Prostate gland (tissue), 2 donors: ENCODE measurements at regions of chr12 and their contacts with region 1.

Region 1: GRCh38 chr12:19647806-19648556 is 208.7 kb downstream of the AEBP2 start:
- DNase-seq: no peak
- H3K4me3 ChIP-seq: no peak overlapping the region
- H3K27ac ChIP-seq: no peak overlapping the region
- H3K4me1 ChIP-seq: no peaks in the 10 kb centered on the region
- H3K27me3 ChIP-seq: no peaks in the 10 kb centered on the region
- CTCF ChIP-seq: peak in 1 of 4 experiments; percentile 9
- POLR2A ChIP-seq: no peak

Region 2: DNA sequence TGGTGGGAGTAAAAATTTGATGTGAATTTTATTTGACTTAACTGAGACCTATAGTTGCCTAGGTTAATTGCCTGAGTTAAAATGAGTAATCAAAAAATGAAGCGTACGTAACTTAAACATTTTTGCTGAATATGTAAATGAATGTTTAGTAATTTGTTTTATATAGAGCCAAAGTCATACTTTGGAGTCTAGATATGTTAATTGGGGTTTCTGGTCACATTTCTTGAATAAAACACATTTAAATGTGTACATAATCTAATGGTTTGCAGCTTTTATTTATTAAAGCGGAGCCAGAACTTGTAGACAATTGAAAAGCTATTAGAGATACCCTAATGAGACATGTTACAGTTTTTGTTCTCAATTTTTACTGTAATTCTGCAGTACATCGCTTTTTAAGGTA is 137.5 kb before region 1 on chr12:
- intact Hi-C with region 1: loop called (anchors 5 kb)
- DNase-seq: no peak
- H3K4me3 ChIP-seq: no peak overlapping the region
- H3K27ac ChIP-seq: no peak overlapping the region
- H3K4me1 ChIP-seq: no peaks in the 10 kb centered on the region
- H3K27me3 ChIP-seq: no peaks in the 10 kb centered on the region
- CTCF ChIP-seq: no peak
- POLR2A ChIP-seq: no peak